Activated CD4-positive, alpha-beta T cell treated with anti-CD3 and anti-CD28 coated beads for 36 hours (primary cell): ENCODE measurements at regions of chr10 and their contacts with region 1.

Region 1: DNA sequence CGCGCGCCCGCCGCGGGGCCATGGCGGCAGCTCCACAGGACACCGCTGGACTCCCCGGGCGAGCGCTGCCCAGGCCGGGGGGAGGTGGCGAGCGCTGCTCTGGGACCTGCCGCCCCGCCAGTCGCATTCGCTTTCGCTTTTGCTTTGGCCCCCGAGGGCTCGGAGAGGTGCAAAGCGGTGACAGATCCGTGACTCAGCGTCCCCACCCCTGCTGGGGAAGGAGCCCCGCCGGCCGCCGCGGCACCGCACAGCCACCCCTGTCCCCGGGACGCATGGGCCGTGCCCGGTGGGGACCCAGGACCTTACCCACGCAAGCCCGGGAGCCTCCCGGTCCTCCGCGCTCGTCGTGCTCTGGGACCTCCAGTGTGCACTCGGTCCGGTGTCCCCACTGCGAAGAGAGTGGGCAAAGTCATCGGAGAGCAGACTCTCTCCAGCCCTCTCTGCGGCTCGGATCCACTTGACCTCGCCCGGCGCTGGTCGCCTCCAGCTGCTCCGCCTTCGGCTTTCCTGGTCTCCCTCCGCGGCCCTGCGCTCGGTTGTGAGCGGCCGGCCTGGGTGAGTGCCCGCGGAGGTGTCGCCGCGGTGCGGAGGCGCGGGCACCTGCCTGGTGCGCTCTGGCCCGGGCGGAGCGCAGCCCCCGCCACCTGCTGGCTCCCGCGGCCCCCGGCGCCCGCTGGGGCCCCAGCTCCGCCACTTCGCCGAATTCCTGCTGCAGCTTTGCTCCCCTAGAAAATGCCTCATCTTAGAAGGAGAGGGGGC is at the start of gene IL15RA:
- DNase-seq: peak; percentile 95
- ATAC-seq: peak; percentile 72
- H3K4me3 Mint-ChIP-seq: peak within 1 kb of the TSS; percentile 94
- H3K27ac Mint-ChIP-seq: peak within 1 kb of the TSS; percentile 95
- H3K4me1 Mint-ChIP-seq: peaks cover 28% of the 10 kb centered on the region
- H3K27me3 Mint-ChIP-seq: no peaks in the 10 kb centered on the region
- total RNA-seq, gene IL15RA: 19.7 to 22.1 TPM

Region 2: DNA sequence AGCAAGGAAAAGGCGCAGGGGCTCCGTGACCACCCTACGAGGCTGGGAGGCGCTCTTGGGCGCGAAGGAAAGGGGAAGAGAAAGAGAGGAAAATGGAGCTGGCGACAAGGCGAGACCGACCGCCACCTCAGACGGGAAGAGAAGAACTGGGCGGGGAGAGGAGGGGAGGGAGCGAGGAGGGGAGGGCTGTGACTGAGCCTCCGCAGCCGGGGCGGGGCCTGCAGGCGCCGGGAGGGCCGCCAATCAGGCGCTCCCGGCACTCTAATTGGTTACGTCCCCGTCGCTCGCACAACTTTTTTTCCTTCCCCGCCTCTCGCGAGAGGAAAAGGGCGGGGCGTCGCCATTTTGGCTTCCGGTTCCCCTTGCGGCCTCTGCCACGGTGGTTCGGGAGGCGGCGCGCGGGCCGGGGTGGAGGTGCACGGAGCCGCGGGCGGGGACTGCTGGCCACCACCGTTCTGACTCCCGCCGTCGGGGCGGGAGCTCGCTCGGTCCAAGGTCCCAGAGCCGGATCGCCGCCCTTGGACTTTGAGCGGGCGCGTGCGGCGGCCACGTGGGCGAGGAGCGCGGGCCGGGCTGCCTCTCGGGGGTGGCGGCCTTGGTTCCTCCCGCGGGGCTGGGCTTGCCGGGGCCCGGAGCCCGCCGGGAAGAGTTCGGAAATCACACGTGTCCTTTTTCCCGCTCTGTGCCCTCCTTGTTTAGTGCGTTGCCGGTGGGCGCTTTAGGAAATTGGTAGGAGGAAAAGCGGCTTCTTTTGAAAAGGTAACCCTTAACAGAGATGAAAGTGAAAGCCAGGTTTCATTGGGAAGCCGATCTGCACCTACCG is 164.2 kb before region 1 on chr10 and contains the start of gene GDI2:
- CTCF ChIA-PET with region 1: no interaction called
- POLR2A ChIA-PET with region 1: no interaction called
- intact Hi-C with region 1: loop called in 1 of 2 experiments (anchors 2 kb)
- DNase-seq: peak; percentile 98
- ATAC-seq: peak; percentile 94
- H3K4me3 Mint-ChIP-seq: peak within 1 kb of the TSS; percentile 92
- H3K27ac Mint-ChIP-seq: peak within 1 kb of the TSS; percentile 98
- H3K4me1 Mint-ChIP-seq: peaks cover 60% of the 10 kb centered on the region
- H3K27me3 Mint-ChIP-seq: no peaks in the 10 kb centered on the region
- total RNA-seq, gene GDI2: 276 to 290 TPM

Region 3: DNA sequence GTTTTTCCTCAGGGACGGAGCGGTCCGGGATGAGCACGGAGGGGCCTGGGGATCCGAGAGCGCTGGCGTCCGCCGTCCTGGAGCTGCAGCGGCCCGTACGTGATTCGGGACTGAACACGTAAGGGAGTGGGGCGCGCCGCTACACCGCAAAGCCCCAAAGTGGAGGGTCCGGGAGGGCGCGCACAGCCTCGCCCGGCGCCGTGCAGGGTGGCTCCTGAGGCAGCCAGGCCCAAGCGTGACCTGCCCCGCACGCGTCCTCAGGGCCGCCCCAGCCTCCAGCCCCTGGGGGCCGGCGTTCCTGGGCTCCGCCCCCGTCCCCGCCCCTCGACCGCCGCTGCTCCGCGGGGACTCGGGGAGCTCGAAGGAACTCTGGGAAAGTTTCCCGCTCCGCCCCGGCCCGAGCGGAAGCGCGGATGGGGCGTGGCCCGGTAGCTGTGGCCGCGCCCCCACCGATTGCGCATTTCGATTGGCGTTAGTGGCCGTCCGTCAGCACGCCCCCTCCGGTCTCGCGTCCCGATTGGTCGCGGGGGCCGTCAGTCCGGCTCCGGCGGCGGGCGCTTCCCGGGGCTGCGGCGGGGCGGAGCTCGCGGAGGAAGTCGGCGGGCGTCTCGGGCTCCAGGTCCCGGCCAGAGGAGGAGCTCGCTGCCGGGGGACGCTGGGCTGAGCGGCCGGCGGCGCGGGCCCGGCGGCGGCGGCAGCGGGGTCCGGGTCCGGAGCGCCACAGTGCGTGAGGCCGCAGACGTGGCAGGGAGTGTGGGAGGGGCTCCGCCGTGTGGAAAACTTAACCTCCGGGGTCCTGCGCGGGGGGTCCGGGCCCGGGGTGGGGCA is 87.8 kb before region 1 on chr10 and contains the starts of genes ANKRD16 and FBH1:
- CTCF ChIA-PET with region 1: no interaction called
- POLR2A ChIA-PET with region 1: interaction called, 6 read pairs
- intact Hi-C with region 1: loop called in 1 of 2 experiments (anchors 1 kb)
- DNase-seq: peak; percentile 99
- ATAC-seq: peak; percentile 87
- H3K4me3 Mint-ChIP-seq: peak within 1 kb of the TSS; percentile 90
- H3K27ac Mint-ChIP-seq: peak within 1 kb of the TSS; percentile 84
- H3K4me1 Mint-ChIP-seq: peaks cover 53% of the 10 kb centered on the region
- H3K27me3 Mint-ChIP-seq: no peaks in the 10 kb centered on the region
- total RNA-seq, gene ANKRD16: 7.5 to 8.3 TPM
- total RNA-seq, gene FBH1: 53.3 to 56.2 TPM

Region 4: GRCh38 chr10:6014241-6014761 is 36.7 kb after region 1 on chr10:
- CTCF ChIA-PET with region 1: interaction called, 13 read pairs
- POLR2A ChIA-PET with region 1: no interaction called
- intact Hi-C with region 1: loop called (anchors 1 kb)
- DNase-seq: peak; percentile 79
- ATAC-seq: peak; percentile 76
- H3K4me3 Mint-ChIP-seq: peak overlapping the region; percentile 14
- H3K27ac Mint-ChIP-seq: peak overlapping the region; percentile 87
- H3K4me1 Mint-ChIP-seq: peaks cover 67% of the 10 kb centered on the region
- H3K27me3 Mint-ChIP-seq: no peaks in the 10 kb centered on the region

Region 5: DNA sequence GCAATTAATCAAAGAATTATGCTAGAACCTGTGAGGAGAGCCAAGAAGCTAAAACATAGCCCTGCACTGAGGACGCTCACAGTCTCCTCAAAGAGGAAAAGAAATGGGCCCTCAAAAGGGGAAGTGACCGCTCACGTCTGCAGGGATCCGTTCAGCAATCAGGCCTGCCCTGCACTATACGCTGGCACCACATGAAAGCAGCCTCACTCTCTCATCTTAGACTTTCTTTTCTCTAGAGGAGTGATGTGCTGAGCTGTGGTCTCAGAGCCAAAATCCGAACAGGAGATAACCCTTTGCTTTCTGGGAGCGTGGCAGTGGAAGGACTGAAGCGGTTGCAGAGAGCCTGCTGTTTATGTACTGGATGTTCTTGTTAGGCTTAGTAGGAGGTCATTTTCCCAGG is 90.8 kb after region 1 on chr10:
- CTCF ChIA-PET with region 1: no interaction called
- POLR2A ChIA-PET with region 1: no interaction called
- intact Hi-C with region 1: no loop called
- DNase-seq: peak; percentile 64
- ATAC-seq: peak; percentile 23
- H3K4me3 Mint-ChIP-seq: peak overlapping the region; percentile 65
- H3K27ac Mint-ChIP-seq: peak overlapping the region; percentile 95
- H3K4me1 Mint-ChIP-seq: peaks cover 90% of the 10 kb centered on the region
- H3K27me3 Mint-ChIP-seq: peaks cover 3% of the 10 kb centered on the region

Region 6: DNA sequence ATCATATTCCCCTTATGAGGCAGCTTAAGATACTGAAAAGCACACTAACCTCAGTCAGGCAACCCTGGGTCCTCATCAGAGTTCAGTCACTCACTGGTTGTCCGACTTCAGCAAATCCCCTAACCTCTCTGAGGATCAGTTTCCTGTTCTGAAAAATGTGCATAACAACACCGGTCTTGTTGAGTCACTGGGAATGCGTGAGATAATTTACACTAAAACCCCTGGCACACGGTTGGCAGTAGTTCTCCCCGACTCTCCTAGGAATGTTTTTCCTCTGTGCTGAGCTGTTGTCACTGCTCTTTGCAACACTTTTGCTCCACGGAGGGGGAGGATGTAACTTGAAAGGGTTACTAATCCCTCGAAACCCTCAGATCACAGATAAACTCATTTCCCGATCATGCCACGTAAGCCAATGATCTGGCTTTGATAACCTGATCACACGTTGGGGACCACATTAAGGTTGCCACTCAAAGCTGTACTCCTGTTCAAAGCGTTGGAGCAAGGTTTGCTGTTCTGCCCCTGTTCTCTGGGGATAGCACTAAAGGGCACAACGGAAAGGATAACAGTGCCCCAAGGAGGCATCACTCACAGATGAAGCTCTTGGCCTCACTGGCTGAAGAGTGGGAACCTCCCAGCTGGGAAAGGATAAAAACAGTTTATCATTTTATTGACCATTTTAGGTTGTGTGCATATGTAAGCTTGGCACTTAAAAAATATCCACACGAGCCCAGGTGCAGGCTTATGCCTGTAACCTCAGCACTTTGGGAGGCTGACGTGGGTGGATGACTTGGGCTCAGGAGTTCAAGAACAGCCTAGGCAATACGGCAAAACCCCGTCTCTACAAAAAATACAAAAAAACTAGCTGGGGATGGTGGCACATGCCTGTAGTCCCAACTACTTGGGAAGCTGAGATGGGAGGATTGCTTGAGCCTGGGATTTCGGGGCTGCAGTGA is 106.1 kb after region 1 on chr10:
- CTCF ChIA-PET with region 1: interaction called, 8 read pairs
- POLR2A ChIA-PET with region 1: no interaction called
- intact Hi-C with region 1: loop called (anchors 1 to 2 kb)
- DNase-seq: peak; percentile 85
- ATAC-seq: peak; percentile 79
- H3K4me3 Mint-ChIP-seq: peak overlapping the region; percentile 71
- H3K27ac Mint-ChIP-seq: peak overlapping the region; percentile 95
- H3K4me1 Mint-ChIP-seq: peaks cover 67% of the 10 kb centered on the region
- H3K27me3 Mint-ChIP-seq: no peaks in the 10 kb centered on the region

Region 7: GRCh38 chr10:6163364-6164270 is 186.0 kb after region 1 on chr10:
- CTCF ChIA-PET with region 1: no interaction called
- POLR2A ChIA-PET with region 1: no interaction called
- intact Hi-C with region 1: loop called in 1 of 2 experiments (anchors 1 kb)
- DNase-seq: peak; percentile 94
- ATAC-seq: peak; percentile 92
- H3K4me3 Mint-ChIP-seq: peak overlapping the region; percentile 92
- H3K27ac Mint-ChIP-seq: peak overlapping the region; percentile 95
- H3K4me1 Mint-ChIP-seq: peaks cover 67% of the 10 kb centered on the region
- H3K27me3 Mint-ChIP-seq: no peaks in the 10 kb centered on the region